ENCODE measurements at regions of chr4 and their contacts with region 1.

Region 1: GRCh38 chr4:82811838-82812341 is 13.3 kb upstream of the SCD5 start:
- DNase-seq: no peak
- H3K4me3 ChIP-seq: no peak overlapping the region
- H3K27me3 ChIP-seq: no peaks in the 10 kb centered on the region
- CTCF ChIP-seq: no peak

Region 2: GRCh38 chr4:82785611-82786400 is 26.1 kb before region 1 on chr4:
- CTCF ChIA-PET with region 1: no interaction called
- POLR2A ChIA-PET with region 1: interaction called, 10 read pairs
- DNase-seq: peak; percentile 65
- H3K4me3 ChIP-seq: no peak overlapping the region
- H3K27me3 ChIP-seq: no peaks in the 10 kb centered on the region
- CTCF ChIP-seq: no peak

Region 3: GRCh38 chr4:82798168-82799005 is 13.5 kb before region 1 on chr4 and contains the start of gene SCD5:
- CTCF ChIA-PET with region 1: interaction called, 12 read pairs
- POLR2A ChIA-PET with region 1: no interaction called
- DNase-seq: peak; percentile 20
- H3K4me3 ChIP-seq: peak within 1 kb of the TSS; percentile 85
- H3K27me3 ChIP-seq: no peaks in the 10 kb centered on the region
- CTCF ChIP-seq: peak; percentile 21; the same call in 1 of the 2 replicates
- polyA plus RNA-seq, gene SCD5: 32.5 and 34.6 TPM in 2 replicates

Region 4: DNA sequence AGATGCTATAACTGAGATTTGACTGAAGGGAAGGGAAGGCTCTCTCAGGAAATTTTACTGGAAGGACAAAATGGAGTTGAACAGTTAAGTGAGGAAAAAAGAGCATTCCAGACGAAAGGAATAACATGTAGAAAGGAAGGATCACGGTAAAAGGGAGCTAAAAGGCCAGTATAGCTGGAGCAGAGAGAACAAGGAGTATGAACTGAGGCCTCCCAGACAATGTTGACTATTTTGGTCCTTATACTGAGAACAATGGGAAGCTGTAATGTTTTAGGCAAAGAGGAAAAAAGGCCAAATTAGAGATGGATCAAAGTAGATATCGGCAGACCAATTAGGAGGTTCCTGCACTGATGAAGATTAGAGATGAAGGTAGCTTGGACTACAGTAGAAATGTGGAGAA is 13.5 kb after region 1 on chr4:
- CTCF ChIA-PET with region 1: interaction called, 4 read pairs
- POLR2A ChIA-PET with region 1: interaction called, 12 read pairs
- DNase-seq: no peak
- H3K4me3 ChIP-seq: no peak overlapping the region
- H3K27me3 ChIP-seq: no peaks in the 10 kb centered on the region
- CTCF ChIP-seq: no peak

Region 5: GRCh38 chr4:83259586-83259985 is 447.7 kb after region 1 on chr4:
- CTCF ChIA-PET with region 1: no interaction called
- POLR2A ChIA-PET with region 1: no interaction called
- DNase-seq: no peak
- H3K4me3 ChIP-seq: no peak overlapping the region
- H3K27me3 ChIP-seq: no peaks in the 10 kb centered on the region
- CTCF ChIP-seq: no peak

Measured in BJ (cell line).